GM10248 (cell line): ENCODE measurements at regions of chr2 and their contacts with region 1.

Region 1: DNA sequence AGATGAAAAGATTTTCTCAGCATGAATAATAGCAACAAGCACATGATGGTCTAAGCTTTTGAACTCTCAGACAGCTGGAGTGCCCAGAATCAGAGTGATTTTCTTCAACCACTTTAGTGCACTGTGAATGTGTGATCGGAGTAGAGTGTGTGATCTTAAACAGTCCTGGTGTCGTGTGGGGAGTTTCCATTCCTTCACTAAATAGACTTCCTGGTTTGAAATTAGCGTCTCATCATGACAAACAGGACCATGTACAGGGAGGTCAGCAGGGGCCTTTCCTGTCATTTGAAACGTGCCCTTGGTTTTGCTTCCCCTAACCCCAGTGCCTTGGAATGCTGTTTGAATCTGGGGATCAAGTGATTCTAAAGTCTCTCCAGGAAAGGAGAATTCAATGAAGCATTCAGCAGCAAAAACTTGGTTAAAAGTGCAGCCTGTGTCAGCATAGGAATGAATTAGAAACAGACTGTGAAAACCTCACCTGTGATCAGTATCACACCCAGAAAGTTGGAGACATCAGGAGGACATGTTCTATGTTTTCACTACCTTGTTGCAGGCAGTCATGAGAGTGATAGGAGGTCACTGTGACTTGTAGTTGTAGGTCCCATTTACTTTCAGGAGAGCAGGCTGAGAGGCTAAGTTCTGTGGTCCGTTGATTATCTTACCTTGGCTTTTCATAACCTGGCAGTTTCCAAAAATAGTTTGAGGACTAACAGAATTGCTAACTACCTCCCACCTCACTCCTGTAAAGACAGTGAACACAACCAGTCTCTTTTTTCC is 400.3 kb downstream of the MTX2 start:
- DNase-seq: peak; percentile 5
- CTCF ChIP-seq: no peak

Region 2: GRCh38 chr2:176680916-176681516 is 11.4 kb after region 1 on chr2:
- CTCF ChIA-PET with region 1: interaction called, 14 read pairs
- POLR2A ChIA-PET with region 1: no interaction called
- DNase-seq: no peak
- CTCF ChIP-seq: no peak

Region 3: GRCh38 chr2:176709149-176709951 is 39.8 kb after region 1 on chr2:
- CTCF ChIA-PET with region 1: no interaction called
- POLR2A ChIA-PET with region 1: no interaction called
- DNase-seq: no peak
- CTCF ChIP-seq: no peak

Region 4: DNA sequence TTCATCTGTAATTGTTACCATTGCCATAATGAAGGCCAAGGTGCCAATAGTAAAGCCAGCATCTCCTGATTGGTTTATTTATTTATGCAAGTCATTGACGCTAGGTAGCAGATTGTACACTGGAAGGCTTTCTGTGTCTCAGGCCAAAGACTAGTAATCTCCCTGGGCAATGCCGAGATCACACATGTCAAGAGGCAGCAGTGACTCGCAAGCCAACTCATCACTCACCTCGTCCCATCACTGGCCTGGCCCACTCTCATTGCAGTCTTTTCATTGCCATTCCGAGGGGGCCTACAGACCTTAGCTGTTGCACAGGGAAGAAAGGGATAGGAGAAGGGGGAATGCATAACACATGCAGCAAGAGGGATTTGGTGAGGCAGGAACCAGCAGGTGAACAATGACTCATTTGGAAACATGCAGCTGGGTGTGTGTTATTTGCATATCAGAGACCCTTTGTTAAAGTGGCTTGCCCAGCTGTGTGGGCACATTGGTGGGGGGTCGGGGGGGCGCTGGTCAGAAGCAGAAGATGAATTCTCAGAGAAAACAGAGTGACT is 94.3 kb after region 1 on chr2:
- CTCF ChIA-PET with region 1: no interaction called
- POLR2A ChIA-PET with region 1: no interaction called
- DNase-seq: no peak
- CTCF ChIP-seq: no peak